ENCODE measurements at regions of chr10 and their contacts with region 1.

Region 1: GRCh38 chr10:48656241-48656913 is 28.3 kb upstream of the WDFY4 start:
- DNase-seq: peak; percentile 80 to 99 (median 90)

Region 2: DNA sequence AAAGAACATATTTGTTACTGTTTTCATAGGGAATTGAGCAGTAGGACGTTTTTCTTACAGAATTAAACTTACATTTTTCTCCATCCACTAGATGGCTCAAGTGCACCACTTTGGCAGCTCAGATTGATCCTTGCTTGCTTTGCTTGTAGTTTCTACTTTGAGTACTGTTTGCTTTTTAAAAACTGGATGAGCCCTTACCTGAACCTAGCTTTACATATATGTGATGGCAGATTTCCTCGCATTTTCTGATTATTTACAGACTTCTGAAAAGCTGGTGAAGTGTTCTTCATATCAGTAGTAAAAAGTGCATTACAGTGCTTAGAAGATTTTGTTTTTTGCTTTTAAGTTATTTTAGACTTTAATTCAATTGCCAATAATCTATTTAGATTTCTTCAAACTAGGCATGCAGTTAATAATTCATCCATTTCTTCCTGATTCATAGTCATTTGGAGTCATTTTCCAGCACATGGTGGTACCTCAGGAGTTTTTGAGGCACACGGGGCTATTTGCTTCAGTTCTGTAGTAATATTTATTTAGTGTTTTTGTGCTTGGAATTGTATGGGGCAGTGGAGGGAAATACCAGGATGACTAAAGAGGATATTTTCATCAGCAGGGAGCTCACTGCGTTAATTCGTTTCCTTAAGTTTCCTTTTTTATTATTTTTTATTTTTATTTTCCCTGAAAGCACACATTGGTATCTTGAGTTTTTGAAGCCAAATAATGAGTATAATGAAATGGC is 292.6 kb before region 1 on chr10:
- intact Hi-C with region 1: loop called (anchors 1 kb)
- DNase-seq: peak in 6 of 10 donors; percentile 11 to 77 (median 33)

Region 3: GRCh38 chr10:48476279-48476982 is 179.9 kb before region 1 on chr10:
- intact Hi-C with region 1: no loop called
- DNase-seq: peak in 1 of 10 donors; percentile 12

Region 4: DNA sequence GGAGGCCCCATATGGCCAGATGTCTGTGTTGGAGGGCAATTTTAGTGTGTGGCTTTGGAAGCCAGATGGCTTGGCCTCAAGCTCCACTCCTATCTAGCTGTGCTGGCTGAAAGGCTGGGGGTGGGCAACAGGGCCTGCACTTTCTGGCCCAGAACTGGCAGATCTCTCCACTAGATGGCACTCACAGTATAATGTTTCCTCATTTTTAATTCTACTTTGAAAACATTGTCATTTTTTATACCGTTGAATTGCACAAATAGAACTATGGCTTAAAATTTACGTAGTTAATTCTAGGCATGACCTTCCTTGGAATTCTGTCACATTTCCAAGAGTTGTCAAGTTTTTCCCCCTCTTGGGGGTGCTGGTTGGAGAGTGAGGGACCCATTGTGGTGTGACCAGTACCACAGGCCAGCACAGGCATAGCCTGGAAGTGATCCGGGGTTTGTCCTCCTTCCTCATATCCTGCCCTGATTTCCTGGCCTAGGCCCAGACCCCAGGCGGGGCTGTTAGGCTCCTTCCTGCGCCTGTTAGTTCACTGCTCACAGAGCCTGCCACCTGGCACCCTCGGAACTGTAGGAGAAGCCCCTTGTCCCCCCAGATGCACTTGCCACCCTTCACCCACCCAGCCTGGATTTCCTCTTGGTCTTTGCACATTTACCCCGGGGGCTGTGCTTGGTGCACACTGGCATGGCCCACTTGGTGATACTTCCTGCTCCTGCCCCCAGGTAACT is 104.4 kb before region 1 on chr10:
- intact Hi-C with region 1: loop called (anchors 1 kb)
- DNase-seq: peak in 5 of 10 donors; percentile 32 to 86 (median 43)

Region 5: DNA sequence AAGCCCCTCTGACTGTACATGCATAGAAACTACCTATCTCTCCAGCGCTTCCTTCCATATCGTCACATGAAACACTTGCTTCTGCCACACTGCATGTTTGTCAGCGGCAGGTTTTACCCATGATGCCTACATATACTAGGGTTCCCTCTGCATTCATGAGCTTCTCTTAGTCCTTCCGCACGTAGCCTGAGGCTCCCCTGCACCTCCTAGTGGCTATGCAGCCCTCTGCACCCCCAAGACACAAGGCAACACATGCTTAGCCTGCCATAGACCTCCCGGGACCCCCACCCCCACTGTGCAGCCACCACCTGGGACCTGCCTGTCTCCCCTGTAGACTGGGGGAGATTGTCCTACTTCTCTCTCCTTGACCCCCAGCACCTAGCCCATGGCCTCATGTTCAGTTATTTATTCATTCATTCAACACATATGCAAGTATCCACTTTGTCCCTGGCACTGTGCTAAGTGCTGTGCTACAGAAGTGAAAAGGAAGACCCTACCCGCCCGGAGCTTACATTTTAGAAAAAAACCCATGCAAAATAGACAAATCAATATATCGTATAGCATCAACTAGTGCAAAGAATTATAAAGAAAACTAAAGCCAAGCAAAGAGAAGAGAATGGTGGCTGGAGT is 508.3 kb after region 1 on chr10:
- intact Hi-C with region 1: loop called (anchors 5 kb)
- DNase-seq: peak in 4 of 10 donors; percentile 31 to 42 (median 34)

Region 6: DNA sequence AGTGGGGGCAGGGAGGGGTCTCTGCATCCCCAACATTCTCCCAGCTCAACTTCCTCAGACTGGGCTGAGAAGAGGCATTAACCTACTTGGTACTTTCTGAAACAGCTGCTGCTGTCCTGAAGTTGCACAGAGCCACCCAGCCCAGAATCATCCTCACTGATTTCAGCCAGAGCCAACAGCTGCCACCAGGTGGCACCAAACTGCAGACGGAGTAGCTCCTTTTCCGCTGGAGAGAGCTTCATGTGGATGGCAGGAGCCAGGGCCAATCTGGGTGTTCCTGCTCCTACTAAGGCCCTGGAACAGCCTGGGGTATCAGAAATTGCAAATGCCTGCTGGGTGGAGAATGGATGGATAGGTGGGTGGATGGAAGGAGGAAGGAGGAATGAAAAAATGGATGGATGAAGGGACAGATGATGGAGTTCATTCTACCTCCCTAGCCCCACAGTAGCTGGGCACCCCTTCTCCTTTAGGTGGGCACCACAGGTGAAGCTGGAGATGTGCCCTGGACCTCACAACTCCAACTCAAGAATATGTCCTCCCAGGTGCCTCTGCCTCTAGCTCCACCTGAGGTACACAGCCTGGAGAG is 751.3 kb after region 1 on chr10:
- intact Hi-C with region 1: loop called (anchors 10 kb)
- DNase-seq: peak; percentile 57 to 96 (median 83)

Region 7: GRCh38 chr10:49512121-49512809 is 855.9 kb after region 1 on chr10:
- intact Hi-C with region 1: loop called (anchors 2 kb)
- DNase-seq: no peak